ENCODE measurements at regions of chr10 and their contacts with region 1.

Region 1: DNA sequence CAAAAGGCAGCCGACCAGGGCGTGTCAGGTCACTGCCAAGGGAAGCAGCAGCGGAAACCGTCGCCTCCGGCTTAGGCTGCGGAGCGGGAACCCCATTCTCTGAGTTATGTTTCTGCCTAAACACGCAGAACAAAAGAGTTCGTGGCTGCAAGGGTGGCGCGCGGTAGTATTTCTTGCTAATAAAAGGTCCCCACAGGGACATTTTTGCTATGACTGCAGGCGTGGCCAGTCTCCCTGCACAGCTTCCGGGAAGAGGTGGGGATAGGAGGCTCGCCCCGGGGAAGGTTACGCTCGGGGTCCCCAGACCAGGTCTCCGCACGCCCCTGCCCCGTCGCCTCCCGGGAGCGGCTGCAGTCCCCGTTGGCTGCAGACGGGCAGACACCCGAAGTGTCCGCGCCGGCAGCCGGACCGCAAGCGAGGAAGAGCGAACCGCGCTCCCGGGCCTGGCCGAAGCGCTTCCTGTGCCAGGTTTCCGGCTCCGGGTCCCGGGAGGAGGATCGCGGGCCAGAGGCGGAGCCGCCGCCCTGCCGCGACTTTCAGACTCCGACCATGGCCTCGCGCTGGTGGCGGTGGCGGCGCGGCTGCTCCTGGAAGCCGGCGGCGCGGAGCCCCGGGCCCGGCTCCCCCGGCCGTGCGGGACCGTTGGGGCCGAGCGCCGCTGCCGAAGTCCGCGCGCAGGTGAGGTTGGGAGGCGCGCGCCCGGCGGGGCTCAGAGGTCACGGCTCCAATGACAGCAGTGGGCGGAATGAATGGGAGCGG is at the start of gene PDSS1:
- DNase-seq: peak; percentile 23 to 82 (median 60)
- ATAC-seq: peak; percentile 73
- H3K4me3 ChIP-seq: peak within 1 kb of the TSS; percentile 85 to 92
- H3K4me3 Mint-ChIP-seq: peak within 1 kb of the TSS; percentile 94
- H3K27ac ChIP-seq: peak within 1 kb of the TSS; percentile 69 to 81
- H3K27ac Mint-ChIP-seq: peak within 1 kb of the TSS; percentile 93
- H3K4me1 ChIP-seq: peaks cover 18% of the 10 kb centered on the region
- H3K4me1 Mint-ChIP-seq: peaks cover 35% of the 10 kb centered on the region
- H3K27me3 ChIP-seq: no peaks in the 10 kb centered on the region
- H3K27me3 Mint-ChIP-seq: no peaks in the 10 kb centered on the region
- CTCF ChIP-seq: no peak
- total RNA-seq, gene PDSS1: 3.4 to 3.7 TPM

Region 2: GRCh38 chr10:26445411-26446031 is 251.8 kb before region 1 on chr10:
- CTCF ChIA-PET with region 1: no interaction called
- POLR2A ChIA-PET with region 1: no interaction called
- intact Hi-C with region 1: no loop called
- DNase-seq: no peak
- ATAC-seq: no peak
- H3K4me3 ChIP-seq: no peak overlapping the region
- H3K4me3 Mint-ChIP-seq: peak overlapping the region; percentile 30
- H3K27ac ChIP-seq: peak overlapping the region in 1 of 2 experiments; percentile 64
- H3K27ac Mint-ChIP-seq: peak overlapping the region; percentile 88
- H3K4me1 ChIP-seq: peaks cover 81% of the 10 kb centered on the region
- H3K4me1 Mint-ChIP-seq: peaks cover 85% of the 10 kb centered on the region
- H3K27me3 ChIP-seq: no peaks in the 10 kb centered on the region
- H3K27me3 Mint-ChIP-seq: no peaks in the 10 kb centered on the region
- CTCF ChIP-seq: no peak

Region 3: DNA sequence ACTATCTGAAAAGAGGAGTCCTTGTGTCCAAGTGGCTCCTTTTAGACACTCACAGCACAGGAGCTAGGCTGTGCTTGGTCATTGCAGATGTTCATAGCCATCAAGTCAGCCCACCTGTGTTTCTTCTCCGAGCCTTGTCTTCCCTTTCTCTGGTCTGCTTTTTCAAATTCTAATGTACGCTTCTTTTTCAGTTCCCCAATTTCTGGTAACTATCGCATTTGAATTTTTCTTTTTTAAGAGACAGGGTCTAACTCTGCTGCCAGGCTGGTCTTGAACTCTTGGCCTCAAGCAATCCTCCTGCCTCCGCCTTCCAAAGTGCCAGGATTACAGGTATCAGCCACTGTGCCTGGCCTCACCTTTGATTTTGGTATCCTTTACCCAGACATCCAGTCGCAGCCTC is 240.3 kb before region 1 on chr10:
- CTCF ChIA-PET with region 1: no interaction called
- POLR2A ChIA-PET with region 1: no interaction called
- intact Hi-C with region 1: no loop called
- DNase-seq: no peak
- ATAC-seq: no peak
- H3K4me3 ChIP-seq: no peak overlapping the region
- H3K4me3 Mint-ChIP-seq: peak overlapping the region; percentile 27
- H3K27ac ChIP-seq: no peak overlapping the region
- H3K27ac Mint-ChIP-seq: peak overlapping the region; percentile 82
- H3K4me1 ChIP-seq: peaks cover 50% of the 10 kb centered on the region
- H3K4me1 Mint-ChIP-seq: peaks cover 82% of the 10 kb centered on the region
- H3K27me3 ChIP-seq: no peaks in the 10 kb centered on the region
- H3K27me3 Mint-ChIP-seq: no peaks in the 10 kb centered on the region
- CTCF ChIP-seq: no peak

Region 4: DNA sequence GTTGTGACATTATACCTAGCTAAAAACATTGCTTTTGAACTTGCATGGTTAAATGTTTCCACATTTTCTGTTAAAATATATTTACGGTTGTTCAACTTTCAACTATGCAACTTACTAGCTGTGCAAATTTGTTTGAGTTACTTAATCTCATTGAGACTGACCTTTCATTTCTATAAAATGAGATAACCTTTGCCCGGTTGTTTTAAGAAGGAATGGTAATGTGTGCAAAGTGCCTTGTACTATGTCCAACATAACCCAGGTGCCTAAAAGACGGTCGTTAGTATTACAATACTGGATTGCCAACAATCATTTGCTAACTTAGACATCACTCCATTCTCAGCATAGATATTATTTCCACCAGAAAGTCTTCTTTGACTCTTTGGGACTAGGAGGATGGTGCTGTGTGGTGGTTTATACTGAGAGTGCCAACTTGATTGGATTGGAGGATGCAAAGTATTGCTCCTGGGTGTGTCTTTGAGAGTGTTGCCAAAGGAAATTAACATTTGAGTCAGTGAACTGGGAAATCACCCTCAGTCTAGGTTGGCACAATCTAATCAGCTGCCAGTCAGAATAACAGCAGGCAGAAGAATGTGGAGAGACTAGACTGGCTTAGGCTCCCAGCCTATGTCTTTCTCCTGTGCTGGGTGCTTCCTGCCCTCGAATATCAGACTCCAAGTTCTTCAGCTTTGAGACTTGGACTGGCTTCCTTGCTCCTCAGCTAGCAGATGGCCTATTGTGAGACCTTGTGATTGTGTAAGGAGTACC is 85.0 kb before region 1 on chr10:
- CTCF ChIA-PET with region 1: no interaction called
- POLR2A ChIA-PET with region 1: no interaction called
- intact Hi-C with region 1: loop called in 1 of 2 experiments (anchors 5 kb)
- DNase-seq: no peak
- ATAC-seq: no peak
- H3K4me3 ChIP-seq: no peak overlapping the region
- H3K4me3 Mint-ChIP-seq: no peak overlapping the region
- H3K27ac ChIP-seq: no peak overlapping the region
- H3K27ac Mint-ChIP-seq: no peak overlapping the region
- H3K4me1 ChIP-seq: no peaks in the 10 kb centered on the region
- H3K4me1 Mint-ChIP-seq: no peaks in the 10 kb centered on the region
- H3K27me3 ChIP-seq: no peaks in the 10 kb centered on the region
- H3K27me3 Mint-ChIP-seq: no peaks in the 10 kb centered on the region
- CTCF ChIP-seq: no peak

Region 5: DNA sequence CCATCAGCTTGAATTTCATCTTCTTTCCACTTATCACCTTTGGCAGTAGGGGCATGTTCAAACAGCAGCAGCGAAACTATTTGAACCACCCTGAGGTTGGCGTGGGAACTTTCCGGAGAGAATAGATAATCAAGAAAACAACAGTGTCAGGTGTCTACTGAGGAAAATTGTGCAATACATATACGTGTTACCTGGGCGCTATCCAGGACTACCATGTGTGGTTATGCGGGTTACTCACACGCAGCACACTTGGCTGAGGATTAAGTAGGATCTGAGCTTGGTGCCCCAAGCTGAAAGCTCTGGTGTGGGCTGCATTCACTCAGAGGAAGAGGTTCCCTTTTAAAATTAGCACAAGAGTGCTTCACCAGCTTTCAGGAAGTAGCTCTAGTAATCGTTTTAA is 172.2 kb after region 1 on chr10:
- CTCF ChIA-PET with region 1: no interaction called
- POLR2A ChIA-PET with region 1: no interaction called
- intact Hi-C with region 1: no loop called
- DNase-seq: peak in 2 of 9 experiments; percentile 14 to 33
- ATAC-seq: peak; percentile 26
- H3K4me3 ChIP-seq: no peak overlapping the region
- H3K4me3 Mint-ChIP-seq: peak overlapping the region; percentile 9
- H3K27ac ChIP-seq: no peak overlapping the region
- H3K27ac Mint-ChIP-seq: no peak overlapping the region
- H3K4me1 ChIP-seq: no peaks in the 10 kb centered on the region
- H3K4me1 Mint-ChIP-seq: peaks cover 6% of the 10 kb centered on the region
- H3K27me3 ChIP-seq: no peaks in the 10 kb centered on the region
- H3K27me3 Mint-ChIP-seq: no peaks in the 10 kb centered on the region
- CTCF ChIP-seq: no peak

Region 6: GRCh38 chr10:27169849-27170248 is 472.5 kb after region 1 on chr10:
- CTCF ChIA-PET with region 1: no interaction called
- POLR2A ChIA-PET with region 1: no interaction called
- intact Hi-C with region 1: no loop called
- DNase-seq: no peak
- ATAC-seq: no peak
- H3K4me3 ChIP-seq: no peak overlapping the region
- H3K4me3 Mint-ChIP-seq: no peak overlapping the region
- H3K27ac ChIP-seq: no peak overlapping the region
- H3K27ac Mint-ChIP-seq: no peak overlapping the region
- H3K4me1 ChIP-seq: no peaks in the 10 kb centered on the region
- H3K4me1 Mint-ChIP-seq: no peaks in the 10 kb centered on the region
- H3K27me3 ChIP-seq: no peaks in the 10 kb centered on the region
- H3K27me3 Mint-ChIP-seq: no peaks in the 10 kb centered on the region
- CTCF ChIP-seq: no peak

Measured in CD8-positive, alpha-beta T cell (primary cell).